T-cell (primary cell): ENCODE measurements at regions of chr10 and their contacts with region 1.

Region 1: DNA sequence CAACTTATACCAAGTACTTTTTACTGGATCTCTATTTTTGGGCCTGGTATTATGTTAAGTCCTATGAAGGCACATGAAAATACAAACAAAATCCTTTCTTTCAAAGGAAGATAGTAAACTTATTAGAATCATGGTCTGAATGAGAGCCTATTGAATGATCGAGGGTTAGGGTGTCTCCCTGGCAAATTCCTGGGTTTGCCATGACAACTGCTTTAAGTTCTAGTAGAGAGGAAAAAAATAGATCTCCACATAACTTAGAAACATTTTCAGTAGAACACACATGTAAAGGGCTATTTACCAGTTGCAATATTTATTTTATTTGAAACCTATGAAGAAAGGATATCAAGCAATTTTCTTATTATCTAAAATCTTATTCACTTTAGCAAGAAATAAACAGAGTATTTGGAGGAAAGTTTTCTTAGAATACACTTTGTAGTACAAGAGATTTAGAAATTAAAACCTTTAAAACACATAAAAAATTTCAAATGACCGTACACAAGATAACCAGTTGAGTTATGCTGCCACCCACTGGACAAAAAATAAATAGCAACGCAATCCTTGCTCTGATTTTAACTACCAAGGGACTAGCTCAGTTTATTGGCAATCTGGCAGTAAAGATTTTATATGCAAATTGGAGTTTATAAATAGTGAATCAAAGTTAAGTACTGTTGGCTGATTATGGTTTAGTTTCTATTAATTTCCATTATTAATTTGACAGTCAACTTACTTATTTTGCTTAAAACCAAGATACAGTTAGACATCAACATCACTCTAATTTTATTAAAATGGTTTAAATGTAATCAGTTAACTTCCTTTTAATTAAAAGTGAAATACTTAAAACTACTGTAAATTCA is 33.9 kb downstream of the CACUL1 start:
- DNase-seq: peak in 31 of 35 experiments; percentile 5 to 80 (median 43)
- ATAC-seq: peak in 1 of 4 experiments; percentile 50
- H3K4me3 ChIP-seq: no peak overlapping the region
- H3K4me3 Mint-ChIP-seq: no peak overlapping the region
- H3K27ac ChIP-seq: no peak overlapping the region
- H3K27ac Mint-ChIP-seq: no peak overlapping the region
- H3K4me1 ChIP-seq: peaks cover 0 to 7% of the 10 kb centered on the region in 2 experiments
- H3K4me1 Mint-ChIP-seq: peaks cover 4 to 21% (median 19%) of the 10 kb centered on the region in 3 donors
- H3K27me3 ChIP-seq: no peaks in the 10 kb centered on the region
- H3K27me3 Mint-ChIP-seq: no peaks in the 10 kb centered on the region

Region 2: DNA sequence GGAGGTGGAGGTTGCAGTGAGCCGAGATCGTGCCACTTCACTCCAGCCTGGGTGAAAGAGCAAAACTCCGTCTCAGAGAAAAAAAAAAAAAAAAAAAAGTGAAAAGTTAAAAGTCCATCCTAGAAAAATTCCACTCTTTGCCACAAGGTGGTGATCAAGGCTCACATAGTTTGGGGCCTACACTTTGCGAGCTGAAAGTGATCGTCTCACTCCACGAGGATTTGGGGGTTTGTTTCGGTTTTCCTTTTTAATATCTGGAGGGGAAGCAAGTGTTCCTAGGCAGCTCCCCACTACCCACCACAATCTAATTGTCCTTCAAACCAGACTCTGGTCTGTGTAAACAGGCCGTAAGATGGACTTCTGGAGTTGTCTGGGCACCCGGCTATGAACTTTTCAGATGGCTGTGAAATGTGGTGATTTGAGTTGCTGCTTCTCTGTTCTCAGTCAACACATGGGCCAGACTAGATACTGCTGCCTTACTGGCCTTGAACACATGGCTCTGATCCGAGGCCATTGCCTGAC is 152.5 kb before region 1 on chr10:
- CTCF ChIA-PET with region 1: interaction called, 41 to 44 read pairs
- POLR2A ChIA-PET with region 1: no interaction called
- DNase-seq: peak in 34 of 35 experiments; percentile 7 to 85 (median 36)
- ATAC-seq: peak; percentile 61 to 73 (median 71)
- H3K4me3 ChIP-seq: no peak overlapping the region
- H3K4me3 Mint-ChIP-seq: no peak overlapping the region
- H3K27ac ChIP-seq: no peak overlapping the region
- H3K27ac Mint-ChIP-seq: no peak overlapping the region
- H3K4me1 ChIP-seq: peaks cover 0 to 14% of the 10 kb centered on the region in 2 experiments
- H3K4me1 Mint-ChIP-seq: peaks cover 7 to 11% (median 10%) of the 10 kb centered on the region in 3 donors
- H3K27me3 ChIP-seq: peaks cover 0 to 14% of the 10 kb centered on the region in 2 experiments
- H3K27me3 Mint-ChIP-seq: no peaks in the 10 kb centered on the region